Left ventricle myocardium inferior (tissue), 1 donor: ENCODE measurements at regions of chr3 and their contacts with region 1.

Region 1: DNA sequence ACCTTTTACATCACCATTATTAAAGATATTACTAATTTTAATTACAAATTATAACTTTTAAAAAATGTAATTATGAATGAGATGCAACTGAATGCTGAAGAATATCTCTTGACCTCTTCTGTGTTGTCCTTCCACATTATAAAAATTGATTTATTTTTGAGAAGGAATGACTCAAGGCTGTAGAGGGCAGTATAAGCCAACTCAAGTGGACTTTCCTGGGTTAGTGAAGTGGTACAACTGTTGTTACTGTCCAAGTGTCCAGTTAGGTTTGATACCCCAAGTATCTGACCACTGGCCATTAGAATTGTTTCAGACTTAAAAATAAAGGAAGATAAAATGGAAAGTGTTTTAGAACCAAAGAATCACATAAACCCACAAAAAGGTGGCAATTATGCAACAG is 51.9 kb downstream of the BBX start:
- DNase-seq: no peak
- H3K4me3 ChIP-seq: no peak overlapping the region
- H3K27ac ChIP-seq: no peak overlapping the region
- H3K4me1 ChIP-seq: peaks cover 14% of the 10 kb centered on the region
- H3K27me3 ChIP-seq: no peaks in the 10 kb centered on the region
- CTCF ChIP-seq: peak; percentile 71

Region 2: GRCh38 chr3:107329088-107329487 is 245.6 kb before region 1 on chr3:
- intact Hi-C with region 1: no loop called
- DNase-seq: no peak
- H3K4me3 ChIP-seq: no peak overlapping the region
- H3K27ac ChIP-seq: no peak overlapping the region
- H3K4me1 ChIP-seq: no peaks in the 10 kb centered on the region
- H3K27me3 ChIP-seq: peaks cover 6% of the 10 kb centered on the region
- CTCF ChIP-seq: no peak

Region 3: DNA sequence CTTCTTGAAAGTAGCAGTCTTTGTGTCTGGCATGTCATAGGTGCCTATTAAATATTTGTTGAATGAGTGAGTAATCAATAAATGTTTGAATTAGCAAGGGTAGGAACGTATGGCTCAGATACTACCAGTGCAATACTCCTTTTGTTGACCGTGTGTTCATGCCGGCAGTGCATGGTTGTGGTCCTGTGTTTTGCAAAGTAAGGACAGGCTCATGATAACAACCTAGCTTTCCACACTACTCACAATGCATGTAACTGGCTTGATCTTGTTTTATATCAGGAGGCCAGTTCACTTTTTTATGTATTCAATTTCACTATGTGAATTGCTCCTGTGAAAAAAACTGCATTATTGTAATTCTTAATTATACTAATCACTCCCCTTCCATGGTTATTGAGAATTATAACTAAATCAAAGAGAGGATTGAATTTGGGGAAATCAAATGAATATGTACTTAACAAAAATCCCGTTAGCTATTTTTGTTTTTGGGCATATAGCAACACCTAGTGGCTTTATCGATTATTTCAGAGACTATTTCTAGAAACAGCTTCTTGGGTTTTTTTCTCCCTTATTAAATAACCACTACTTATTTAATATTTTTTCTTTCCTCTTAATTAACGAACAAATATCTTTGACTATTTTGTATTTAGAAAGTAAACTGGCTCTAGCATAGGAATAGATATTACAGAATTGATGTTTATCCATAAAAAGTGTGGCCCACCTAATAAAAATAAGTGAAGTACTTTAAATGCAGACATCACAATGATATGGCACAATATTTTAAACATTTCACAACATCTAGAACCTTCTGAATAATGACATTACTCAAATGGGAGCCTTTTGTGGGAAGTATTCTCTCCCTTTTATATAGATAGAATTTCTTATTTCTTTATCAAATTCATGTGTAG is 166.6 kb after region 1 on chr3:
- intact Hi-C with region 1: loop called (anchors 5 kb)
- DNase-seq: no peak
- H3K4me3 ChIP-seq: no peak overlapping the region
- H3K27ac ChIP-seq: no peak overlapping the region
- H3K4me1 ChIP-seq: peaks cover 7% of the 10 kb centered on the region
- H3K27me3 ChIP-seq: no peaks in the 10 kb centered on the region
- CTCF ChIP-seq: peak; percentile 72